Activated B cell treated with CpG ODN at 0.5 μM for 24 hours (primary cell): ENCODE measurements at regions of chr1 and their contacts with region 1.

Region 1: GRCh38 chr1:177118901-177119300 is 45.6 kb downstream of the ASTN1 start:
- DNase-seq: no peak
- ATAC-seq: no peak
- H3K4me3 Mint-ChIP-seq: no peak overlapping the region
- H3K27ac Mint-ChIP-seq: no peak overlapping the region
- H3K4me1 Mint-ChIP-seq: no peaks in the 10 kb centered on the region
- H3K27me3 Mint-ChIP-seq: peaks cover 2% of the 10 kb centered on the region
- CTCF ChIP-seq: no peak

Region 2: GRCh38 chr1:177145102-177146070 is 26.5 kb after region 1 on chr1:
- CTCF ChIA-PET with region 1: no interaction called
- POLR2A ChIA-PET with region 1: no interaction called
- intact Hi-C with region 1: loop called (anchors 1 kb)
- DNase-seq: no peak
- ATAC-seq: no peak
- H3K4me3 Mint-ChIP-seq: no peak overlapping the region
- H3K27ac Mint-ChIP-seq: no peak overlapping the region
- H3K4me1 Mint-ChIP-seq: peaks cover 5% of the 10 kb centered on the region
- H3K27me3 Mint-ChIP-seq: no peaks in the 10 kb centered on the region
- CTCF ChIP-seq: no peak